ENCODE measurements at regions of chr12 and their contacts with region 1.

Region 1: DNA sequence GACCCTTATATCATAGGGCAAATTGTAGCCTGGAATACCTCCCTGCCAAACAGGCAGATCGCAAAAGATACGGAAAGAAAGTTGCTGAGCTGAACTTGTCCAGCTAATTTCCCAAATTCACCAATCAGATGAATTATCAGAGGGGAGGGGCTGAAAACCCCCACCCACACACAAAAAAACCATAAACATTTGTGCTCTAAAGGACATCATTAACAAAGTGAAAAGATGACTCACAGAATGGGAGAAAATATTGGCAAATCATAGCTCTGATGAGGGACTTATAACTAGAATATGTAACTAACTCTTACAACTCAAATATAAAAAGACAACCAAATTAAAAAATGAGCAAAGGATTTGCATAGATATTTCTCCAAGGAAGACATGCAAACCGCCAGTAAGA is 36.3 kb downstream of the PTHLH start:
- DNase-seq: no peak
- ATAC-seq: no peak
- H3K4me3 ChIP-seq: no peak overlapping the region
- H3K27ac ChIP-seq: no peak overlapping the region
- H3K4me1 ChIP-seq: no peaks in the 10 kb centered on the region
- H3K27me3 ChIP-seq: no peaks in the 10 kb centered on the region
- CTCF ChIP-seq: no peak

Region 2: DNA sequence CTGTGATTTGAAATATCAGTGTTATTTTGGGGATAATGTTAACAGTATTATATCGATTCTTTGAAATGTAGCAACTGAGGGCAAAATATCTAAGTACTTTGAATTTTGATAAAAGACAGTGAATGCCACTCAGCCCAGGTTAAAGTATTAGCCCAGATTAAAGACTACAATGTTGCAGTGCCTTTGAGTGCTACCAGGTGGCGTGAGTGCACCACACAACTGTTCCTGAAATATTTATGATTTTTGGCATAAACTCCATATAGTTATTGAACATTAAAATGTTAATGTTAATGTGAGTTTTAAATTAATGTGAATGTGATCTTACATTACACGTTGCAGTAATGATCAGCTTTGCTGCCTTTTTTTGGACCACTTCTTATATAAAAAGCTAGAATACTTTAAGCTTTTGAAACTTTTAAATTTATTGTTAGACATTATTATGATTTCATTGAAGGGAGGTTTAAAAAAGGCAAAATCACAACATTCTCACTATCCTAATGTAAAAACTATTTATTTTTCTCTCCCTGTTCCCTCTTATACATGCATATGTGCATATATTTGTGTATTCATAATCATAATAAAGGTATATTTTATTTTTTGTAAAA is 203.0 kb before region 1 on chr12:
- intact Hi-C with region 1: loop called (anchors 10 kb)
- DNase-seq: no peak
- ATAC-seq: peak; percentile 78
- H3K4me3 ChIP-seq: no peak overlapping the region
- H3K27ac ChIP-seq: no peak overlapping the region
- H3K4me1 ChIP-seq: no peaks in the 10 kb centered on the region
- H3K27me3 ChIP-seq: no peaks in the 10 kb centered on the region
- CTCF ChIP-seq: peak; percentile 78

Region 3: GRCh38 chr12:27969624-27970400 is 33.6 kb after region 1 on chr12:
- intact Hi-C with region 1: no loop called
- DNase-seq: peak; percentile 76
- ATAC-seq: peak; percentile 77
- H3K4me3 ChIP-seq: peak overlapping the region; percentile 48
- H3K27ac ChIP-seq: no peak overlapping the region
- H3K4me1 ChIP-seq: peaks cover 23% of the 10 kb centered on the region
- H3K27me3 ChIP-seq: peaks cover 50% of the 10 kb centered on the region
- CTCF ChIP-seq: no peak

Measured in upper lobe of right lung (tissue), 1 donor.